ENCODE measurements at regions of chr1 and their contacts with region 1.

Region 1: DNA sequence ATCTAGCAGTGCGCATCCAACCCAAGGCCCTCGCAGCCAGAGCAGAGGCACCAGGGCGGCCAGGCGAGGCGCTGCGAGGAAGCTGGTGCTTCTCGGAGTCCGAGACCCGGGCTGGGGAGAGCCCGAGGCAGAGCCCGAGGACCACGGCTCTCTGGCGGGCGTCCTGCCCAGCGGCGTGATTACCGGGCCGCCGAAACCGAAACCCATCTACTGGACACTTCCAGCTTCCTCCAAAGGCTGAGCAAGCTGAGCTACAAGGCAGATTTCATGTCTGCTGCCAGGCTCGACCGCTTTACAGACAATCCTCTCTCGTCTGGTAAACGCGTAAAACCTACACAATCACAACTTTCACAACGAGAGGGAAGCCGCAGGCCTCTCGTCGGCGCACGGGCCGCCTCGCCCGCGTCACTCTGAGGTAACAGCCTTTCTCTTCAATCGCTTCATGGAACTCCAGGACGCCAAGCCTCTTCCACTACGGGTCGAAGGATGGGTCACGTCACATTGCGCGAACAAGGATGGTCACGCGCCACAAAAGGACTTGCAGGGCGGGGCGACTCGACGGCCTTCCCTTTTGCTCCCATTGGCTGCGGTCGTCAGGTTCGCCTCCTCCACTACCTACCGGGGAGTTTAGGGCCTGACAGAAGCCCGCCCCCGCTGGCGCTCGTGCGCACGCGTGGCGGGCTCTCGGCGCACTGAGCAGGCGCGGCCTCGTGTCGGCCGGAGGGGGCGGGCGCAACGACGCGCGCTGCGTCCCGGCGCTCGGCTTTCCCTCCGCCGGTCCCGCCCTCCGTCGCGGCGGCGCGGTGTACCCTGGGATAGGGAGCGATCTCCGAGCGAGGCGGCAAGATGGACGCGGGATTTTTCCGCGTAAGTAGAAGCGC is at the start of gene SRRM1:
- DNase-seq: peak; percentile 98 to 100 (median 100)
- H3K4me3 ChIP-seq: peak within 1 kb of the TSS; percentile 94 to 95 (median 94)
- H3K4me3 Mint-ChIP-seq: peak within 1 kb of the TSS; percentile 83 to 97
- H3K27ac ChIP-seq: peak within 1 kb of the TSS; percentile 94 to 95
- H3K27ac Mint-ChIP-seq: peak within 1 kb of the TSS; percentile 98 to 100 (median 99)
- H3K4me1 ChIP-seq: peaks cover 14 to 26% of the 10 kb centered on the region in 2 donors
- H3K4me1 Mint-ChIP-seq: peaks cover 28% of the 10 kb centered on the region
- H3K27me3 ChIP-seq: no peaks in the 10 kb centered on the region
- H3K27me3 Mint-ChIP-seq: peaks cover 0 to 1% (median under 1%) of the 10 kb centered on the region in 3 donors
- CTCF ChIP-seq: no peak
- polyA plus RNA-seq, gene SRRM1: 55.9 to 106 (median 75.9) TPM

Region 2: GRCh38 chr1:23367791-23368561 is 1274.7 kb before region 1 on chr1:
- intact Hi-C with region 1: loop called in 1 of 2 experiments (anchors 10 kb)
- DNase-seq: peak; percentile 95 to 99 (median 97)
- H3K4me3 ChIP-seq: peak overlapping the region; percentile 86 to 100 (median 100)
- H3K4me3 Mint-ChIP-seq: peak overlapping the region; percentile 92 to 96
- H3K27ac ChIP-seq: peak overlapping the region; percentile 83 to 88
- H3K27ac Mint-ChIP-seq: peak overlapping the region; percentile 91 to 97 (median 93)
- H3K4me1 ChIP-seq: peaks cover 18 to 30% of the 10 kb centered on the region in 2 donors
- H3K4me1 Mint-ChIP-seq: peaks cover 31% of the 10 kb centered on the region
- H3K27me3 ChIP-seq: no peaks in the 10 kb centered on the region
- H3K27me3 Mint-ChIP-seq: peaks cover 0 to 3% (median 2%) of the 10 kb centered on the region in 3 donors
- CTCF ChIP-seq: no peak

Region 3: DNA sequence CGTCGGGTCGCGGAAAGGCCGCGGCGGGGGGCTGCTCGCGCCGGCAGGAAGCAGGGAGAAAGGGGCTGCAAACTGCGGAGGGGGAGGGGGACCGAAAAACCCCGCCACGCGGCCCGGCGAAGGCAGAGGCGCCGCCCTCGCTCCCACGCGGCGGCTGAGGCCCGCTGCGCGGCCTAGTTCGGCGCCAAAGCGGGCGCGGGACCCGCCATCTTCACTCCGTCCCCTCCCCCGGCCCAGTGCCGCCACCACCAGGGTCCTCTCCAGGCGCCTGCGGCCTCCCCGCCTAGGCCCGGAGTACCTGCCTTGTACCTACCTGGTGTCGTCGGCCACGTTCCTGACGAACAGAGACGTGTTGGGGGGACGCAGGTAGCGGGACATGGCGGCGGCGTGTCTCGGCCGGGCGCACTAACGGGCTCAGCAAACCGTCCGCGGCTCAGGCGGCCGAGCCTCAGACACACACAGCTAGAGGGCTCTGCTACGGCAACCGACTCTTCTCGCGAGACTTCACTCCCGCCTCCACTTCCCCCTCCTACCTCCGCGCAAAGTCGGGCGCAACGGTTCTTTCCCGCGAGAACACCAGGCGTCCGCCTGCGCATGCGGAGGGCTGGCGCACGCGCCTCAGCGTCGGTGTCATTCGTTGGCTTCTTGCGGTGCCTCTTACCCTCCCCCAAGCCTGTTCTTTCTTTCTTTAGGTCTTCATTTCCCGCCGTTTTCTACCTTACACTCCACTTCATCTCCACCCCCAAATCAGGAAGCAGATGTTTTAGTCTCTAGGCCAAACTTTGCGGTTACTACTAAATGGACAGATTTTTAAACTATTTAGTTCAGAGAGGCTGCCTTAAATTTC is 662.6 kb before region 1 on chr1 and contains the start of gene SRSF10:
- intact Hi-C with region 1: loop called in 1 of 2 experiments (anchors 10 kb)
- DNase-seq: peak; percentile 98 to 99 (median 99)
- H3K4me3 ChIP-seq: peak within 1 kb of the TSS; percentile 72 to 95 (median 93)
- H3K4me3 Mint-ChIP-seq: peak within 1 kb of the TSS; percentile 82 to 97
- H3K27ac ChIP-seq: peak within 1 kb of the TSS; percentile 94 to 98
- H3K27ac Mint-ChIP-seq: peak within 1 kb of the TSS; percentile 89 to 98 (median 96)
- H3K4me1 ChIP-seq: peaks cover 25 to 39% of the 10 kb centered on the region in 2 donors
- H3K4me1 Mint-ChIP-seq: peaks cover 40% of the 10 kb centered on the region
- H3K27me3 ChIP-seq: no peaks in the 10 kb centered on the region
- H3K27me3 Mint-ChIP-seq: peaks cover 0 to 2% (median 0%) of the 10 kb centered on the region in 3 donors
- CTCF ChIP-seq: peak; percentile 19
- polyA plus RNA-seq, gene SRSF10: 66.6 to 76.2 (median 75.6) TPM

Region 4: GRCh38 chr1:24186993-24187805 is 455.5 kb before region 1 on chr1 and contains the start of gene IFNLR1:
- intact Hi-C with region 1: loop called in 1 of 2 experiments (anchors 5 kb)
- DNase-seq: peak in 2 of 3 donors; percentile 27 to 35
- H3K4me3 ChIP-seq: peak within 1 kb of the TSS in 2 of 3 experiments; percentile 22 to 65
- H3K4me3 Mint-ChIP-seq: peak within 1 kb of the TSS; percentile 75 to 90
- H3K27ac ChIP-seq: no peak within 1 kb of the TSS
- H3K27ac Mint-ChIP-seq: peak within 1 kb of the TSS in 3 of 7 donors; percentile 11 to 30 (median 19)
- H3K4me1 ChIP-seq: peaks cover 44 to 53% of the 10 kb centered on the region in 2 donors
- H3K4me1 Mint-ChIP-seq: peaks cover 53% of the 10 kb centered on the region
- H3K27me3 ChIP-seq: peaks cover 17 to 36% of the 10 kb centered on the region in 2 donors
- H3K27me3 Mint-ChIP-seq: peaks cover 32 to 51% (median 49%) of the 10 kb centered on the region in 3 donors
- CTCF ChIP-seq: no peak
- polyA plus RNA-seq, gene IFNLR1: not detected

Region 5: GRCh38 chr1:25073640-25074270 is 431.0 kb after region 1 on chr1:
- intact Hi-C with region 1: no loop called
- DNase-seq: no peak
- H3K4me3 ChIP-seq: no peak overlapping the region
- H3K4me3 Mint-ChIP-seq: no peak overlapping the region
- H3K27ac ChIP-seq: no peak overlapping the region
- H3K27ac Mint-ChIP-seq: no peak overlapping the region
- H3K4me1 ChIP-seq: no peaks in the 10 kb centered on the region
- H3K4me1 Mint-ChIP-seq: no peaks in the 10 kb centered on the region
- H3K27me3 ChIP-seq: no peaks in the 10 kb centered on the region
- H3K27me3 Mint-ChIP-seq: peaks cover 0 to 5% (median 0%) of the 10 kb centered on the region in 3 donors
- CTCF ChIP-seq: no peak

Region 6: DNA sequence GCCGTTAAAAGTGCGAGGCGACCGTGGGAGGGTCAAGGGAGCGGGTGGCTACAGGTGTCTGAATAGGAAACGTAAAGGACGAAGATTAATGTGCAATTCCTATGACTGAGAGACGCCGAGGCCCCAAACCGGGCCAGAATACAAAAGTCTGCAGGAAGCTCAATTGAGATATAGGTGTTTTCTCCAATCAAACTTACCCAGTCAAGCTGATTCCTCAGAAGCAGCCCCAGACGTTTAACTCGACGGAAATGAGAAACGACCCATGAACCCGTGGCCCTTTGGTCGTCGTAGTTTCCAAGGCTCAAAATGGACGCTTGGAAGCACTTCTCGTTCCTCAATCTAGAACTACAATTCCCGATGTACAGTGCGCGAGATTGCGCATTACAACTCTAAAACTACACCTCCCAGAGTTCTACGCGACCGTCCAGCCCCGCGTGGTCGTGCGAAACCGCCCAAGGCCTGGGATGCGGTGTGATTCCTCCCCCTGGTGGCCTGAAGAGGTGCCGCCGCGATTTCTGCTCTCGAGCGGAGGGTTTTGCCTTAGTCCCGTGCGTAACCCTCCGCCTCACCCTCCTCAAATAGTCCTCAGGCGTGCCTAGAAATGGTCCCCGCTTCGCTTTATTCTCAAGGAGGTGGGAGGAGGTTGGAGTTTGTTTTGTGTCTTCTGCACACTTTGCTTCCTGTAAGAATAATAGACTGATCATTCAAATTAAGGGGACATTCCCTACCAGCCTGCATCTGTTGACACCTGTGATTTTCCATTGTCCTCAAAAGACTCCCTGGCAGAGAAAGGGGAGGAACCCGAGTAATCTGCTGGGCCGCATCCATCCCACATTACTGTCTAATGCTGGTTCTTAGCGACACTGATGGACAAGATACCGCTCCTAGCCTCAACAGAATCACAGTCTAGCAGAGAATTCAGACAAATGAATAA is 1355.4 kb after region 1 on chr1 and contains the start of gene PAFAH2:
- intact Hi-C with region 1: loop called in 1 of 2 experiments (anchors 5 kb)
- DNase-seq: peak; percentile 99 to 100 (median 99)
- H3K4me3 ChIP-seq: peak within 1 kb of the TSS; percentile 71 to 85 (median 83)
- H3K4me3 Mint-ChIP-seq: peak within 1 kb of the TSS; percentile 83 to 96
- H3K27ac ChIP-seq: peak within 1 kb of the TSS; percentile 97 to 98
- H3K27ac Mint-ChIP-seq: peak within 1 kb of the TSS; percentile 99 to 100 (median 100)
- H3K4me1 ChIP-seq: peaks cover 25 to 30% of the 10 kb centered on the region in 2 donors
- H3K4me1 Mint-ChIP-seq: peaks cover 28% of the 10 kb centered on the region
- H3K27me3 ChIP-seq: no peaks in the 10 kb centered on the region
- H3K27me3 Mint-ChIP-seq: peaks cover 0 to 5% (median 0%) of the 10 kb centered on the region in 3 donors
- CTCF ChIP-seq: peak; percentile 90
- polyA plus RNA-seq, gene PAFAH2: 6.4 to 9.2 (median 6.8) TPM

Measured in CD14-positive monocyte (primary cell).